CD8-positive, alpha-beta memory T cell (primary cell): ENCODE measurements at regions of chr4 and their contacts with region 1.

Region 1: DNA sequence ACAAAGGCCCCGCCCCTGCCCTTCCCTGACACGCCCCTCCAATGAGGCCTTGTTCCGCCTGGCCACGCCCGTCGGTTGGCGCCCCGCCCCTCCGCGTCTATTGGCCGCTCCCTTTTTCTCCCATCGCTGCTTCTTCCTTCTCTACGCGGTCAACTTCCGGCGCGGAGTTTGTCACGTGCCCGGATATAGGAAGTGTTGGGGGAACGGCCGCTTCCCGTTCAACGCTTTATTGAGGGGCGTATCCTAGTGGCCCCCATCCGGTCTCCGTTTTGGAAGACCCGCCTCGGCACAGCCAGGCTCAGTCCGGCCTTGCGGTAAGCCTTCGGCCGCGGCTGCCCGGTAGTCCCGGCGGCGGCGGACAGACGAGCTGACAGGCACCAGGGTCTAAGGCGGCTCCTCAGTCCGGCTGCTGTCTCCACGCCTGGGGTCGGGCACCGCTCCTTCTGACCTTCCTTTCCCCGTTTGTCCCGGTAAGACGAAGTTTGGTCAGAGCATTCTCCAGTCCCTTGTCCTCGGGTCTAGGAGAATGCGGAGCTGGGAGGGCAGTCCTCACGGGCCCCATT is at the start of gene EXOC1:
- DNase-seq: peak; percentile 92 to 97 (median 95)
- H3K4me3 ChIP-seq: peak within 1 kb of the TSS; percentile 88
- H3K4me3 Mint-ChIP-seq: peak within 1 kb of the TSS in 6 of 7 donors; percentile 34 to 70 (median 58)
- H3K27ac ChIP-seq: peak within 1 kb of the TSS; percentile 76
- H3K27ac Mint-ChIP-seq: peak within 1 kb of the TSS; percentile 8 to 97 (median 78)
- H3K4me1 ChIP-seq: peaks cover 35% of the 10 kb centered on the region
- H3K4me1 Mint-ChIP-seq: peaks cover 12 to 48% (median 42%) of the 10 kb centered on the region in 3 donors
- H3K27me3 ChIP-seq: no peaks in the 10 kb centered on the region
- H3K27me3 Mint-ChIP-seq: no peaks in the 10 kb centered on the region
- total RNA-seq, gene EXOC1: 23.4 to 24.6 TPM

Region 2: GRCh38 chr4:55706541-55706940 is 147.0 kb before region 1 on chr4:
- CTCF ChIA-PET with region 1: no interaction called
- POLR2A ChIA-PET with region 1: no interaction called
- DNase-seq: no peak
- H3K4me3 ChIP-seq: no peak overlapping the region
- H3K4me3 Mint-ChIP-seq: no peak overlapping the region
- H3K27ac ChIP-seq: no peak overlapping the region
- H3K27ac Mint-ChIP-seq: no peak overlapping the region
- H3K4me1 ChIP-seq: no peaks in the 10 kb centered on the region
- H3K4me1 Mint-ChIP-seq: peaks cover 0 to 3% (median 2%) of the 10 kb centered on the region in 3 donors
- H3K27me3 ChIP-seq: no peaks in the 10 kb centered on the region
- H3K27me3 Mint-ChIP-seq: peaks cover 6 to 22% of the 10 kb centered on the region in 2 donors

Region 3: DNA sequence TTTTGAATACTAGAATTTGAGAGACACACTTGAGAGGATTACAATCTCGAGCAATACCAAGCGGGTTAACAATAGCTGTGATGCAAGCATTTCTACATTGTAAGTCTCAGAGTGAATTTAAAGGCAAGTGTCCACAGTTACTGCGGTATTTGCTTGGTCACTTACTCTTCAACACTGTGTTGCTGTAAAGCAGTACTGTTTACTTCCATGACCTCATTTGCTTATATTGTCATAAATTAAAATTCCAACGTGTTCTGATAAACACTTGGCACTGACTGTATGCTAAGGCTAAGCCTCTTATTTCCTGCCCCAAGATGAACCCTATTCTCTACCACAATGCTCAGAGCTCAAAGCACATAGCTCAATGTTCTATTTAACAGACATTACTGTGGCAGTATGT is 22.8 kb before region 1 on chr4:
- CTCF ChIA-PET with region 1: no interaction called
- POLR2A ChIA-PET with region 1: no interaction called
- DNase-seq: no peak
- H3K4me3 ChIP-seq: no peak overlapping the region
- H3K4me3 Mint-ChIP-seq: no peak overlapping the region
- H3K27ac ChIP-seq: no peak overlapping the region
- H3K27ac Mint-ChIP-seq: no peak overlapping the region
- H3K4me1 ChIP-seq: no peaks in the 10 kb centered on the region
- H3K4me1 Mint-ChIP-seq: no peaks in the 10 kb centered on the region
- H3K27me3 ChIP-seq: no peaks in the 10 kb centered on the region
- H3K27me3 Mint-ChIP-seq: peaks cover 0 to 65% of the 10 kb centered on the region in 2 donors

Region 4: GRCh38 chr4:55866973-55867574 is 13.5 kb after region 1 on chr4:
- CTCF ChIA-PET with region 1: interaction called, 14 read pairs
- POLR2A ChIA-PET with region 1: interaction called, 6 read pairs
- DNase-seq: peak in 3 of 5 donors; percentile 42 to 50 (median 47)
- H3K4me3 ChIP-seq: no peak overlapping the region
- H3K4me3 Mint-ChIP-seq: no peak overlapping the region
- H3K27ac ChIP-seq: no peak overlapping the region
- H3K27ac Mint-ChIP-seq: peak overlapping the region in 4 of 8 donors; percentile 27 to 89 (median 48)
- H3K4me1 ChIP-seq: no peaks in the 10 kb centered on the region
- H3K4me1 Mint-ChIP-seq: peaks cover 19 to 29% (median 27%) of the 10 kb centered on the region in 3 donors
- H3K27me3 ChIP-seq: no peaks in the 10 kb centered on the region
- H3K27me3 Mint-ChIP-seq: no peaks in the 10 kb centered on the region

Region 5: GRCh38 chr4:55880652-55881280 is 27.2 kb after region 1 on chr4:
- CTCF ChIA-PET with region 1: interaction called, 3 read pairs
- POLR2A ChIA-PET with region 1: interaction called, 11 read pairs
- DNase-seq: no peak
- H3K4me3 ChIP-seq: no peak overlapping the region
- H3K4me3 Mint-ChIP-seq: no peak overlapping the region
- H3K27ac ChIP-seq: no peak overlapping the region
- H3K27ac Mint-ChIP-seq: peak overlapping the region in 2 of 8 donors; percentile 23 to 44
- H3K4me1 ChIP-seq: no peaks in the 10 kb centered on the region
- H3K4me1 Mint-ChIP-seq: peaks cover 0 to 14% (median 0%) of the 10 kb centered on the region in 3 donors
- H3K27me3 ChIP-seq: no peaks in the 10 kb centered on the region
- H3K27me3 Mint-ChIP-seq: no peaks in the 10 kb centered on the region